Heart right ventricle (tissue), 16 donors: ENCODE measurements at regions of chr9 and their contacts with region 1.

Region 1: DNA sequence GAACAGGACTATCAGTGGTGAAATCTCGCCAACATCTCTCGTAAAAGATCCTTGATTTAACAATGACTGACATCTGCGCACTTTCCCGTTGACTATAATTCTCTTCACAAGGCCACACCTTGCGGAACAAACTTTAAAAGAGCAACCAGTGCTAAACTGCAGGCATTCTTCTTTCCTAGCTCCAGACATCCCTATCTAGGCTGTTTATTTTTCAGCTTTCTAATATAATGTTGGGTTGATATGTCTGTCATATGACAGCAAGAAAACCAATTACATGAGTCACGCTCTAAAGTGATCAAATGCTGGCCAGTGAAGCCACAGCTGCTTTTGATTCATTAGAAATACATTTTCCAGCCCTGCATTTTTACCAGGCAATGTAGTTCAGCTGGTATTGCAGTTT is 162.5 kb downstream of the ELAVL2 start:
- DNase-seq: no peak
- ATAC-seq: no peak
- H3K4me3 ChIP-seq: no peak overlapping the region
- H3K27ac ChIP-seq: no peak overlapping the region
- H3K4me1 ChIP-seq: no peaks in the 10 kb centered on the region
- H3K27me3 ChIP-seq: no peaks in the 10 kb centered on the region
- CTCF ChIP-seq: no peak

Region 2: GRCh38 chr9:23603311-23603710 is 60.2 kb before region 1 on chr9:
- intact Hi-C with region 1: loop called in 1 of 10 experiments (anchors 10 kb)
- DNase-seq: no peak
- ATAC-seq: no peak
- H3K4me3 ChIP-seq: no peak overlapping the region
- H3K27ac ChIP-seq: no peak overlapping the region
- H3K4me1 ChIP-seq: no peaks in the 10 kb centered on the region
- H3K27me3 ChIP-seq: no peaks in the 10 kb centered on the region
- CTCF ChIP-seq: no peak

Region 3: DNA sequence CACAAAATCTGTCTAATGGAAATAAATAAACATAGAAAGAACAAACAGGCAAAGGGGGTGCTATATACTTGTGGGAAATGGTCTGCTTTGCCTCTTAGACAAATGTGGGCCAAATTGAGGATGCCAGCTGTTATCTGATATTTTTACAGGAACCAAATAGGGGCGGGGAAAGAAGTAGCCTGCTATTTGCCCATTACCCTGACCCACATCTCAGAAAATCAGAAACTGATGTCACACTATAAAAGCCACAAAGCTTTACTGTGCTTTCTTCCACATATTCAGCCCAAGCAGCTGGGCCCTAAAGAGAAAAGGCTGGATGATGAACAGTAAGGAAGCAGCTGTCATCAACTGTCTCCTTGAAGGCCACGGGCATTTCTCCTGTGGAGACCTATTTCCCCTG is 65.2 kb after region 1 on chr9:
- intact Hi-C with region 1: loop called in 1 of 10 experiments (anchors 10 kb)
- DNase-seq: no peak
- ATAC-seq: no peak
- H3K4me3 ChIP-seq: no peak overlapping the region
- H3K27ac ChIP-seq: no peak overlapping the region
- H3K4me1 ChIP-seq: no peaks in the 10 kb centered on the region
- H3K27me3 ChIP-seq: no peaks in the 10 kb centered on the region
- CTCF ChIP-seq: no peak